RWPE1 (cell line): ENCODE measurements at regions of chr5 and their contacts with region 1.

Region 1: GRCh38 chr5:14628346-14628745 is 36.2 kb upstream of the OTULIN start:
- DNase-seq: peak; percentile 48
- H3K27ac ChIP-seq: no peak overlapping the region
- CTCF ChIP-seq: no peak

Region 2: GRCh38 chr5:15105796-15106393 is 477.5 kb after region 1 on chr5:
- CTCF ChIA-PET with region 1: interaction called, 10 read pairs
- POLR2A ChIA-PET with region 1: no interaction called
- DNase-seq: peak; percentile 44
- H3K27ac ChIP-seq: no peak overlapping the region
- CTCF ChIP-seq: peak; percentile 89